OCI-LY7 (cell line): ENCODE measurements at regions of chr2 and their contacts with region 1.

Region 1: DNA sequence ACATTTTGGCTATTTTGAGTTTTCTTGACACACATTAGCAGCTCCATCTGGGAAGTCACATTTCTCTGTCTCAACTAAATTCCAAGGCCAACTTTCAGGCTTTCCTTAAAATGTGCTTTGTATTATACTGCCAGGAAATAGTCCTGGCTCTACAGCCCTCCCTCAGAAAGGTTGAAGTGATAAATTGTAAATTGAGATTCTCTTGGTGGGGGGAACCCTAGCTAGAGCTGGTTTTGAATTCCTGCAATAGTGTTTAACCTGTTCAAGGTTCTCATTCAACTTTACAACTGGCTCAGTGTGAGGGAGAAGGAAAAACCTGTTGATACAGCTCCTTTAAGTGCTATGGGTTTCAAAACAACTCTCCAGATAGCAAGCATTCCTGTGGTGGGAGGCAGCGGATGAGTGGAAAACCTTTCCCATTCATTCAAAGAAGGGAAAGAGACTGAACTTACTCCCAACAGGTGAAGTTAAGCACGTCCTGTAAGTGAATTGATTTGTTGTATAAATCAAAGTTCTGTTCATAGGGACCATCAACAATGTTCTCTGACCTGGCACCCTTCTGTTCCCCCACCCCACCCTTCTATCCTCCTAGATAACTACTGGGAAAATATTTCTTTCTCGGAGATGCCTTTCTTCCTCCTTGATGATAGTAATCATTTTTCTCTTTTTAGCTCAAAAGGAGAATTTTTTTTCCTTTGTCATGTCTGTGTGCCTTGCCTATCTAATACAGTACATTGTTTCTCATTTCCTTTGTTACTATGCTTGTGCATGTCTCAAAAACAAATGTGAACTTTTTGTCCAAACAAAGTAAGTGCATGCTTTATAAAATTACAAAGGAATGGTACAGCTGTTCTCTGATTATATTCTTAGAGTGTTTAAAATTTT is 44.2 kb upstream of the SLC39A10 start:
- DNase-seq: no peak
- H3K4me3 ChIP-seq: no peak overlapping the region
- H3K27ac ChIP-seq: no peak overlapping the region
- H3K4me1 ChIP-seq: peaks cover 10% of the 10 kb centered on the region
- CTCF ChIP-seq: no peak

Region 2: DNA sequence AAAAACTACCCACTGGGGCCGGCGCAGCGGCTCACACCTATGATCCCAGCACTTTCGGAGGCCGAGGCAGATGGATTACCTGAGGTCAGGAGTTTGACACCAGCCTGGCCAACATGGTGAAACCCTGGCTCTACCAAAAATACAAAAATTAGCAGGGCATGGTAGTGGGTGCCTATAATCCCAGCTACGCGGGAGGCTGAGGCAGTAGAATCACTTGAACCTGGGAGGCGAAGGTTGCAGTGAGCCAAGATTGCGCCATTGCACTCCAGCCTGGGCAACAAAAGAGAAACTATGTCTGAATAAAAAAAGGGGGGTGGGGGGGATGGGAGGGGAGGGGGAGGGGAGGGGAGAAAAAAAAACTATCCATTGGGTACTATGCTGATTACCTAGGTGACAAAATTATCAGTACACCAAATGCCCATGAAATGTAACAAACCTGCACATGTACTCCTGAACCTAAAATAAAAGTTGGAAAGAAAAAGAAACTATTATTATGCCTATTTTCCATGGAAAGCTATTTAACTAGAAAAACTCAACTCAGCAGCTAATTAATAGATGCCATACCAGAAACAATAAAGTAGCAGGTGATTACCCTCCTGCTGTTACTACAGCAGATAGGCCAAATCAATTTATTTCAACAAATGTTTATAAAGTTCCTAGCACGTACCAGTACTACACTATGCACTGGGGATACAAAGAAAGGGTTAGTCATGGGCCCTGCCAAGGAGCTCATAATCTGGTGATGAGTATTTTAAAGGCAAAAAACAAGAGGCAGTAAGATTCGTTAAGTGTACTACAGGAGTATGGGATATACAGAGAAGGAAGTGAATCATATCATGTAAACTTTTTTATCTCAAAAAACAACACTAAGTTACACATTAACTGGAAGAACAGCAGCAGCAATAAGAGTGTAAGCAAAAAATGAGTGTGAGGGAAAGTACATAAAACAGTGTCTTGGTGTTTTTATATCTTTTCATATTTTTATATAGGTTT is 68.7 kb before region 1 on chr2:
- CTCF ChIA-PET with region 1: no interaction called
- POLR2A ChIA-PET with region 1: no interaction called
- intact Hi-C with region 1: no loop called
- DNase-seq: no peak
- H3K4me3 ChIP-seq: no peak overlapping the region
- H3K27ac ChIP-seq: no peak overlapping the region
- H3K4me1 ChIP-seq: peaks cover 6% of the 10 kb centered on the region
- CTCF ChIP-seq: no peak

Region 3: DNA sequence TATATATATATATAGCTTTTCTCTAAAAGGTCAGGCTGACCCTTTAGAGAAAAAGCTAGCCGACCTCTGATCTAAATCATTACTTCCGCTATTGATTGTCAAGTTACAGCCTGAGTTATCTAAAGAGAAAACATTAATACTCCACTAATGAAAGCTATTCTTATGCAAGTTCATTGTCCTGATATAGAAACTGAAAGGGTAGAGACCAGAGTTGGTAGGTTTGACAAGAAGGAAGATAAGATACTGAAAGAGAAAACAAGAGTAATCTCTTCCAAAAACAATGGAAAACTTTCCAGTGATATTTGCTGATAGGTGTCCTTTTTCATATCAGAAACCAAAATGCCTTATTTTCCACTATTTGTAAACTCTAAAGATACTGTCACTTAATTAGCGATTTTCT is 18.6 kb before region 1 on chr2:
- CTCF ChIA-PET with region 1: no interaction called
- POLR2A ChIA-PET with region 1: interaction called, 10 read pairs
- intact Hi-C with region 1: no loop called
- DNase-seq: no peak
- H3K4me3 ChIP-seq: no peak overlapping the region
- H3K27ac ChIP-seq: no peak overlapping the region
- H3K4me1 ChIP-seq: no peaks in the 10 kb centered on the region
- CTCF ChIP-seq: no peak